Ascending aorta (tissue), 2 donors: ENCODE measurements at regions of chrX and their contacts with region 1.

Region 1: DNA sequence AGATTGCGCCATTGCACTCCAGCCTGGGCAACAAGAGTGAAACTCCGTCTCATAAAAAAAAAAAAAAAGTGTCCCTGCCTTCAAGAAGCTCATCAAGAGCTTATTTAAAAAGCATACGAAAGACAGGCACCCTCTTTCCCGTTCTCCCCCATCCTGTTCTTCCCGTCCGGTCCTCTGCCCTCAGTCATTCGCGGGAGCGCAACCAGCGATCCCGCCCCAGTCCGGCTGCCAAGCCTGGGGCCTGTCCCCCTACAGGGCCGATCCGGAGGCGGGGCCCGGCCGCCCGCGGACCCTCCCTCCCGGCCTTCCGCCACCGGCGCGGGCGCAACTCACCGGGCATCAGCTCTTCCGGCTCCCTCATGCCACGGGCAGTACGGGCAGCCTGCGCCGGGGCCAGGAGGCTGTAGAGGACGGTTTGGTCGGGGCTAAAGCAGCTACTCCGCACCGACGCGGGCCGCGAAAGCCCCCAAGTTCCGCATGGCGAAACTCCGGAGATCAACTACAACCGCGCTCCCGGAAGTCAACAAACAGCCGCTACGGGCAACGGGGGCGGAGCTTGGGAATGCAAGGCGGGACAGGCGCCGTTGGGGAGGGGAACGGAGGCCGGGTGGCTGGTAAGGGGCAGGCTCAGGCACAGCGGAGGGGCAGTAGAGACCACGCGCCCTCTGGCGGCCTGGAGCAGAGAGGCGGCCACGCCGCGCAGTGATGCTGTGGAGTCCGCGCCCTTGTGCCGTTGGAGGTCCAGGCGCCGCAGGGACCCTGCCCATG is at the start of gene RPGR:
- DNase-seq: peak; percentile 73 to 96
- H3K4me3 ChIP-seq: peak within 1 kb of the TSS; percentile 61 to 76
- H3K27ac ChIP-seq: peak within 1 kb of the TSS; percentile 84 to 85
- H3K4me1 ChIP-seq: no peaks in the 10 kb centered on the region
- H3K27me3 ChIP-seq: no peaks in the 10 kb centered on the region
- CTCF ChIP-seq: peak; percentile 62 to 68 (median 63)
- total RNA-seq, gene RPGR: 12.0 TPM

Region 2: GRCh38 chrX:37578045-37578444 is 749.1 kb before region 1 on chrX:
- intact Hi-C with region 1: loop called (anchors 10 kb)
- DNase-seq: no peak
- H3K4me3 ChIP-seq: no peak overlapping the region
- H3K27ac ChIP-seq: peak overlapping the region in 1 of 2 donors; percentile 48
- H3K4me1 ChIP-seq: peaks cover 0 to 3% of the 10 kb centered on the region in 2 donors
- H3K27me3 ChIP-seq: no peaks in the 10 kb centered on the region
- CTCF ChIP-seq: no peak

Region 3: DNA sequence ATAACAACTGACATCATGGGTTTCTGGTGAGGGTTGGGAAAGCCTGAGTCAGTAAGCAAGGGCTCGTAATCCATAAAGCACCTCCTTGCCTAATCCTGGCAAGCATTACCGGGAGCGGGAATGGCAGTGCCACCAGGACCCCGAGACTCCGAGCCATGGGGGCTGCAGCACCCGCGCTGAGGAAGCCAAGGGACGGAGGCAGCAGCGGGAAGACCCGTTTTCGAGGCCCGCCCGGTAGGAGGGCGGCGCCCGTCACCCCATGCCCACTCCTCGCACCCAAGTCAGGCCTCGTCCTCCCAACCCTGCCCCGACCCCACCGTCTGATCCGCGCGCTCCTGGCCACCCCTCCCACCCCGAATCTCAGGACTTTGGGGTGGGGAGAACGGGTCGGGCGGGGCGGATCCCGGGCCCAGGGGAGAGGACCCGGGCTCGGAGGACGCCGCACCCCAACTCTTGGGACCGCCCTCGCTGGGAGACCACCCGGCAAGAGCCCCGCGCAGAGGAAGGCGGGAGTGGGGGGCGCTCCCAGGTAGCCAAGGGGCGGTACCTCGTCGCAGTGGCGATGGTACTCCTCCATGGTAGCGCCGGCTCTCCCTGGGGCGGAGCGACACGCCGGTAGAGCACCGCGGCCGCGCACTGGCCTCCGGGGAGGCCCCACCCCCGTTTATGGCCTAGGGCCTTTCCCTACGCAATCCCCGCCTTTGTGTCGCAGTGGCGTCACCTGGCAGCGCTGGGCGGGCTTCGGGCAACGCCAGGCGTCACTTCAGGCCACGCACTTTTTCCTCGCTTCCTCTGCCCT is 480.1 kb before region 1 on chrX and contains the start of gene DYNLT3:
- intact Hi-C with region 1: loop called (anchors 10 kb)
- DNase-seq: peak; percentile 28 to 92
- H3K4me3 ChIP-seq: peak within 1 kb of the TSS; percentile 51 to 88
- H3K27ac ChIP-seq: peak within 1 kb of the TSS; percentile 88 to 89
- H3K4me1 ChIP-seq: no peaks in the 10 kb centered on the region
- H3K27me3 ChIP-seq: no peaks in the 10 kb centered on the region
- CTCF ChIP-seq: no peak
- total RNA-seq, gene DYNLT3: 32.2 TPM

Region 4: DNA sequence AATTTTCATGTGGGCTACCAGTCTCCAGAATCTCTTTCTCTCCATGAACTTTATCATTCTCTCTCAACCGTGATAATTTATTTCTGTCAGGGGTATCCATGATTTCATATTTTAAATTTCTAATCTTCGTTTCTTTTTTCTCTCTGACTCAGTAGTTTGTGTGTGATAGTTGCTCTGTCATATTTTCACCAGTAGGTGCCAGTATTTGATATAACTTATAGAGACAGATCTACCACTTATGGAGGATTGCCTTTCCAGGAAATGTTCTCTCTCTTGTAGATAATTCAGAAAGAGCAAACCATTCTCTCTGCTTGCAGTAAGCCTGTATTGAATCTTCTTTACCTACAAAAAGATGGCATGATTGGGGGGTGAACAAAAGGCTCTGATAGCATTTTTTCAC is 400.5 kb before region 1 on chrX:
- intact Hi-C with region 1: loop called (anchors 2 kb)
- DNase-seq: no peak
- H3K4me3 ChIP-seq: no peak overlapping the region
- H3K27ac ChIP-seq: no peak overlapping the region
- H3K4me1 ChIP-seq: no peaks in the 10 kb centered on the region
- H3K27me3 ChIP-seq: no peaks in the 10 kb centered on the region
- CTCF ChIP-seq: peak; percentile 19 to 49 (median 32)

Region 5: DNA sequence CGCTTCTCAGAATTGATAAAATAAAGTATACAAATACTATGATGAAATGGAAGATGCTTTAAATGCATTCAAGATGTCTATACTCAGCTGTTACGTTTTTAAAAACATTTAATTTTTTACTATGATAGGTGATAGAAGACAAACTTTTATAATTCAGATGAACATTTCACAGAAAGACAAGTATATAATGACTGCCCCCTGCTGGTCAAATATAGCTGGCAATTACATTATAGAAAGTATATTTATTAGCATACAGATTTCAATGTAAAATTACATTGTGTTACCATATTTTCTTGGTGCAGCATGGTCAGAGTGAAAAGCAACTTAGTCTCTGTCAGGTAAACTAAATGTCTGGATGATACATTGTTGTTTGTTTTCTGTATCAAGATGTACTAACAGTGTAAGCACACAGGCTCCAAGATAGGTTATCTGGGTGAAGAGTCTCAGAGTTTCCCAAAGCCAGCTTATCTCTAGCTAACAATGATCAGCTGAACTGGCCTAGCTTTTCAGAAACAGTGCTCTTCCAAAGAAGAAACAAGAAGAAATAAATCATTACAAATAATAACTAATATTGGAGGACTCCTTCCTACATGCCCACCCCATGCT is 160.6 kb before region 1 on chrX:
- intact Hi-C with region 1: loop called (anchors 5 kb)
- DNase-seq: no peak
- H3K4me3 ChIP-seq: no peak overlapping the region
- H3K27ac ChIP-seq: no peak overlapping the region
- H3K4me1 ChIP-seq: no peaks in the 10 kb centered on the region
- H3K27me3 ChIP-seq: no peaks in the 10 kb centered on the region
- CTCF ChIP-seq: peak in 2 of 3 experiments; percentile 38 to 54

Region 6: GRCh38 chrX:38192007-38192810 is 135.0 kb before region 1 on chrX:
- intact Hi-C with region 1: loop called (anchors 1 kb)
- DNase-seq: no peak
- H3K4me3 ChIP-seq: no peak overlapping the region
- H3K27ac ChIP-seq: no peak overlapping the region
- H3K4me1 ChIP-seq: no peaks in the 10 kb centered on the region
- H3K27me3 ChIP-seq: no peaks in the 10 kb centered on the region
- CTCF ChIP-seq: peak in 2 of 3 experiments; percentile 16 to 27

Region 7: GRCh38 chrX:38233891-38234667 is 93.1 kb before region 1 on chrX:
- intact Hi-C with region 1: loop called (anchors 5 kb)
- DNase-seq: no peak
- H3K4me3 ChIP-seq: no peak overlapping the region
- H3K27ac ChIP-seq: peak overlapping the region; percentile 42 to 59
- H3K4me1 ChIP-seq: peaks cover 0 to 7% of the 10 kb centered on the region in 2 donors
- H3K27me3 ChIP-seq: no peaks in the 10 kb centered on the region
- CTCF ChIP-seq: no peak

Region 8: DNA sequence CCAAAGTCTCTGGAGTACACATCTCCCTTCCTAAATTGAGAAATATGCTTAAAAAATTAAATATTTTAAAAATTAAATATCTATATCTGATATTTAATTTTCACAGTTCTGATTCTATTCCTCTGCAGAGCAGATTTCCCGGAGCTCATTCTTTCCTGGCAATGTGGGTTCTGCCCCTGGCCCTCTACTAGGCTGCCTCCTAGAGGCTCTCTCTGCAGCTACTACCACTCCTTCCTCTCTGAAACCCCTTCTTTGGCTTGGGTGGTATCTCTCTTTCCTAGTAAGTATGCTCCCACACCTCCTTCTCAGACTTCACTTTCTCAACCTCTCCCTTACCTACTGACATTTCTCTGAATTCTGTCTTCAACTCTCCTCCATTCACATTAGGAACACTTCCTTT is 45.1 kb before region 1 on chrX:
- intact Hi-C with region 1: no loop called
- DNase-seq: no peak
- H3K4me3 ChIP-seq: no peak overlapping the region
- H3K27ac ChIP-seq: no peak overlapping the region
- H3K4me1 ChIP-seq: no peaks in the 10 kb centered on the region
- H3K27me3 ChIP-seq: no peaks in the 10 kb centered on the region
- CTCF ChIP-seq: peak in 2 of 3 experiments; percentile 18 to 42

Region 9: GRCh38 chrX:38599796-38600755 is 272.9 kb after region 1 on chrX:
- intact Hi-C with region 1: no loop called
- DNase-seq: no peak
- H3K4me3 ChIP-seq: no peak overlapping the region
- H3K27ac ChIP-seq: no peak overlapping the region
- H3K4me1 ChIP-seq: no peaks in the 10 kb centered on the region
- H3K27me3 ChIP-seq: no peaks in the 10 kb centered on the region
- CTCF ChIP-seq: no peak